ENCODE measurements at regions of chr1 and their contacts with region 1.

Region 1: DNA sequence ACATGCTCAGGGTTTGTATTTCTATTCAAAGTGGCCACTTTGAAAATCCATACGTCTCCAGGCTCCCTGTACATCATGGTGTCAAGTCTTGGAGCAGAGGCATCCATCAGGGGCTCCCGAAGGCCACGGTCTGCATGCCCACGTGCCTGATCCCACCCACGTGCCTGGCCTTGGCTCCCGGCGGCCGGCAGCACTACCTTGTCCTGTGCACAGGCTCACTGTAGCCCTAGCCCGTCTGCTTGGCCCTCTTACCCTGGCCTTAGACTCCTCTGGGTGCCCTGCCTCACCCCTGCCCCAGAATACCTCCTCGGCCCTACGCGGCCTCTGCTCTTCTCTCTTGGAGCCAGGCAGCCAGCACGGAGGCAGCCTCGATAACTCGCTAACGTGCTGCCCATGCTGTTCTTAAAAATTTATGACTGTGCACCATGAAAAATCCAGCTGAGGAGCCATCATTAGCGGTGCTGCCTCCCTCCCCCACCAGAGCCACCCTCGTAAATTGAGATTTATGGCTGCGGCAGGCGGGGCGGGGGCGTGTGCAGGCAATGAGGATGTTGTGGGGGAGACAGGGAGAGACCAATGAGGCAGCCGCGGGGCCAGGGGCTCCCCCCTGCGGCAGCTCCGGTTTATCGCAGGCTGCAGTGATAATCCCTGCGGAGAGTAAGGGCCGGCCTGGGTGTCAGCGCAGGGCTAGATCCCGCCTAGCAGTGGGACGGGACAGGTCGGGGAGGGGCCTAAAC is 24.6 kb downstream of the DMAP1 start:
- DNase-seq: no peak
- ATAC-seq: peak; percentile 20; the same call in 1 of the 3 replicates
- H3K4me3 ChIP-seq: no peak overlapping the region
- H3K27ac ChIP-seq: no peak overlapping the region
- H3K4me1 ChIP-seq: peaks cover 22% of the 10 kb centered on the region
- H3K27me3 ChIP-seq: no peaks in the 10 kb centered on the region
- CTCF ChIP-seq: peak; percentile 25; the same call in 1 of the 2 replicates
- EP300 ChIP-seq: no peak
- POLR2A ChIP-seq: no peak
- RAD21 ChIP-seq: no peak

Region 2: GRCh38 chr1:44318097-44319088 is 80.5 kb after region 1 on chr1:
- CTCF ChIA-PET with region 1: interaction called, 6 read pairs
- POLR2A ChIA-PET with region 1: no interaction called
- in situ Hi-C with region 1: no loop called
- intact Hi-C with region 1: loop called (anchors 5 kb)
- DNase-seq: peak; percentile 34
- ATAC-seq: peak; percentile 54; the same call in 2 of the 3 replicates
- H3K4me3 ChIP-seq: no peak overlapping the region
- H3K27ac ChIP-seq: no peak overlapping the region
- H3K4me1 ChIP-seq: no peaks in the 10 kb centered on the region
- H3K27me3 ChIP-seq: no peaks in the 10 kb centered on the region
- CTCF ChIP-seq: peak; percentile 78
- EP300 ChIP-seq: no peak
- POLR2A ChIP-seq: no peak
- RAD21 ChIP-seq: peak; percentile 34; the same call in 1 of the 2 replicates

Measured in HepG2 (cell line).